Activated T-helper 1 cell treated with anti-CD3 and anti-CD28 coated beads, Interleukin-12 subunit alpha, Interleukin-12 subunit beta, Interleukin-2, Interleukin-4 antibody, amounts not matched to agents 30 ng/mL and 10 ng/mL and 1 ng/mL, durations not matched to agents 14 hours and 24 hours and 36 hours (primary cell): ENCODE measurements at regions of chr9 and their contacts with region 1.

Region 1: DNA sequence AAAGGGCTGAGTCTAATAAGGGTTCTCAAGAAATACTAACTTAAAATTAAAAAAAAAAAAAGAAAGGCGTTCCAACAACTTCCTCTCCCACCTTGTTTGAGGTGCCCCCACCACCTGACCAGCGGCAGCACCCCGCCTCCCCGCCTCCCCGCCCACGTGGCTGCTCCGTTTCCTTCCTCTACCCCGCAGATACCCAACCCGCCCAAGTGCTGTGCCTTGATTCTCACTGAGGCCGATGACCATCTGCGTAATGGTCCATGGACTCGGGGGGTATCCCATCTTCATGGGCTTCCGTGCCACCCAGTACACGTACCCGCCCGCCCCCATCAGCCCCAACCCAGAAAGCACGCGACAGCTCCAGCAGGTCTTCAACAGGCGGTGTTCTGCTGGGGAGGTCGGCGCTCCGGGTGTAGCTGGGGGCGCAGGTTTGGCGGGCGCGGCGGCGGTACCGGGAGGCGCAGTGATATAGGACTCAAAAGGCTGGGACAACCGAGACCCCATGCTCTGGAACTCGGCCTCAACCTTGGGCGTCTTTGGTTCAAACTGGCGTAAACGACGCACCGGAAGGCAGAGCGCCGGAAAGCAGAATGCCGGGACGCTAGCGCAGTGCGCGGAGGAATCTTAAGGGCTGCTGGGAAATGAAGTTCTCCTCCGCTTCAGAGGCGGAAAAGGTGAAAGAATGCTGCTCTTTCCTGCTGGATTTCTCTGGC is at the start of gene DMAC1:
- DNase-seq: peak; percentile 69
- H3K4me3 Mint-ChIP-seq: peak within 1 kb of the TSS; percentile 96
- H3K27ac Mint-ChIP-seq: peak within 1 kb of the TSS; percentile 94
- H3K4me1 Mint-ChIP-seq: peaks cover 20% of the 10 kb centered on the region
- H3K27me3 Mint-ChIP-seq: no peaks in the 10 kb centered on the region
- total RNA-seq, gene DMAC1: 45.3 and 46.4 TPM in 2 replicates

Region 2: GRCh38 chr9:7756088-7756487 is 43.3 kb before region 1 on chr9:
- intact Hi-C with region 1: loop called (anchors 1 kb)
- DNase-seq: peak; percentile 35
- H3K4me3 Mint-ChIP-seq: peak overlapping the region; percentile 21
- H3K27ac Mint-ChIP-seq: peak overlapping the region; percentile 0
- H3K4me1 Mint-ChIP-seq: peaks cover 39% of the 10 kb centered on the region
- H3K27me3 Mint-ChIP-seq: peaks cover 6% of the 10 kb centered on the region

Region 3: DNA sequence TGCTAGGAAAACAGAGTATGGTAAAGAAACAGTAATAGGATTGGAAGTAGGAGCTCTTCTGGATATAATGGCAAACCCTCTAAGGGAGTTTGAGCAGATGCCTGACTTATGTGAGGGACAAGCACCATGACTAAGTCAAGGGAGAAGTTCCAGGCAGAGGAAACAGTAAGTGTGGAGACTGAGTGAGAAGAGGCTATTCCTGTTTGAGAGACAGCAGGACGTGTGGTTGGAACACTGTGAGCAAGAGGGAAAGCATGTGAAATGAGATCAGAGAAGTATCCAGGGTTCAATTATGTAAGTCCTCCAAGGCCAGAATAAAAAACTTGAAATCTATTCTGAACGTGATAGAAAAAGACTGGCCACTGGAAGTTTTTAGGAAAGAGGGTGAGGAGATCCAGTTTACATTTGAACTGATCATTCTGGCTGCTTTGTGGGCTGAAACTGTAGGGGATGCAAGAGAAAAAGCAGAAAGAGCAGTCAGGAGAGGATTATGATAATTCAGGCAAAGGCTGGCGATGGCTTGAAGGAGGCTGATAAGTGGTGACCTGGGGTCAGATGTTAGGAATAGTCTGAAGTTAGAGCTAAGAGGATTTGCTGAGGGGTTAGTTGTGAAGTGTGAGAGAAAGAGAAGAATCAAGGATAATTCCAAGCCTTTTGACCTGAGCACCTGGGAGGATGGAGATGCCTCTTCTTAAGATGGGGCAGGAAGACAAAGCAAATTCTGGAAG is 19.0 kb before region 1 on chr9:
- intact Hi-C with region 1: no loop called
- DNase-seq: no peak
- H3K4me3 Mint-ChIP-seq: no peak overlapping the region
- H3K27ac Mint-ChIP-seq: no peak overlapping the region
- H3K4me1 Mint-ChIP-seq: peaks cover 6% of the 10 kb centered on the region
- H3K27me3 Mint-ChIP-seq: peaks cover 8% of the 10 kb centered on the region

Region 4: DNA sequence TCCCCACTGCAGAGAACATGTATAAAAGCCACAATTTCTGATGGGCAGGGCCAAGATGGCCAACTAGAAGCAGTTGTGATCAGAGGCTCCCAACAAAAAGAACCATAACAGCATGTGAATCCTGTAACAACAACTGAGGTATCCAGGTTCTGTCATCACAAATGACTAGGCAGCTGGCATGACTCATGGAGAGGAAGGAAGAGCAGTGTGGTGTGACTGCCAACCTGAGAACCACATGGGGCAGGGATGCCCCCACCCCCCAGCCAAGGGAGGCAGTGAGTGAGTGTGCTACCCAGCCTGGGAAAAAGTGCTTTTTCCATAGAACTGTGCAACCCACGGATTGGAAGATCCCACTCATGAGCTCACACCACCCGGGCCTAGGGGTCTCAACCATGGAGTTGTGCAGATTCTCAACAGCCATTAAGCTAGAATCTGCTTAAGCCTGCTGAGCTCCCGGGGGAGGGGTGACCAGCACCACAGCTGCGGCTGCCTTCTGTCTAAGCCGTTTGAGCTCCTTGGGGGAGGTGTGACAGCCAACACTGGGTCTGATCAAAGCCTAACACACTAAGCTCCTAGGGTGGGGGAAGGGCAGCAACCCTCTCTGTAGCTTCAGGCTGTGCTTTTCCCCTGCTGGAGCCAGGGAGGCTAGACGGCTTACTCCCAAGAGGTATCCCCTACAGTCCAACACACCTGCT is 80.3 kb after region 1 on chr9:
- intact Hi-C with region 1: no loop called
- DNase-seq: peak; percentile 2
- H3K4me3 Mint-ChIP-seq: no peak overlapping the region
- H3K27ac Mint-ChIP-seq: peak overlapping the region; percentile 20
- H3K4me1 Mint-ChIP-seq: peaks cover 12% of the 10 kb centered on the region
- H3K27me3 Mint-ChIP-seq: no peaks in the 10 kb centered on the region